HEK293 (cell line): ENCODE measurements at regions of chr6 and their contacts with region 1.

Region 1: GRCh38 chr6:34248727-34249551 is at the start of gene SMIM29:
- H3K4me3 ChIP-seq: peak within 1 kb of the TSS; percentile 79
- H3K27ac ChIP-seq: peak within 1 kb of the TSS; percentile 56; the same call in 1 of the 2 replicates
- H3K4me1 ChIP-seq: peaks cover 3% of the 10 kb centered on the region
- CTCF ChIP-seq: peak; percentile 78

Region 2: DNA sequence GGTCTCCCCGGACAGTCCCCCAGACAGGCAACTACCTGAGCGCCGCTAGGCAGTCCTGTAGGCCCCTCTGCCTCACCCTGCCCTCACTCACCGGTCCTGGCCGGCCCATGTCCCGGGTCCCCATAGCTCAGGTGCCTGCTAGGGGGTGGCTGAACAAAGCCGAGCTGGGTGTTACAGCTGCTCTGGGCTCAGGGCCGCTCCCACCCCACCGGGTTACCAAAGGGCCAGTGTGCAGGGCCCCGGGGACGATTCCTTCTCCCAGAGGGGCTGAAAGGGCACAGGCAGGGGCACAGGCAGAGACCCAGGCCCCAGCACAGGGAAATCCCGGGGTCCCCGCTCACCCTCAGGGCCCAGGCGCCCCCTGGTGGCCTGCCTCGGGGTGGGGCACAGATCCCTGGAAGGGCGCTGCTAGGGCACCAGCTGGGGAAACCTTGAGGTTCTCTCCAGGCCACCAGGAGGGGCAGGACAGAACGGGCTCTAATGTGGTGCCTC is 221.4 kb before region 1 on chr6:
- CTCF ChIA-PET with region 1: no interaction called
- POLR2A ChIA-PET with region 1: no interaction called
- H3K4me3 ChIP-seq: no peak overlapping the region
- H3K27ac ChIP-seq: no peak overlapping the region
- H3K4me1 ChIP-seq: no peaks in the 10 kb centered on the region
- CTCF ChIP-seq: peak; percentile 54

Region 3: DNA sequence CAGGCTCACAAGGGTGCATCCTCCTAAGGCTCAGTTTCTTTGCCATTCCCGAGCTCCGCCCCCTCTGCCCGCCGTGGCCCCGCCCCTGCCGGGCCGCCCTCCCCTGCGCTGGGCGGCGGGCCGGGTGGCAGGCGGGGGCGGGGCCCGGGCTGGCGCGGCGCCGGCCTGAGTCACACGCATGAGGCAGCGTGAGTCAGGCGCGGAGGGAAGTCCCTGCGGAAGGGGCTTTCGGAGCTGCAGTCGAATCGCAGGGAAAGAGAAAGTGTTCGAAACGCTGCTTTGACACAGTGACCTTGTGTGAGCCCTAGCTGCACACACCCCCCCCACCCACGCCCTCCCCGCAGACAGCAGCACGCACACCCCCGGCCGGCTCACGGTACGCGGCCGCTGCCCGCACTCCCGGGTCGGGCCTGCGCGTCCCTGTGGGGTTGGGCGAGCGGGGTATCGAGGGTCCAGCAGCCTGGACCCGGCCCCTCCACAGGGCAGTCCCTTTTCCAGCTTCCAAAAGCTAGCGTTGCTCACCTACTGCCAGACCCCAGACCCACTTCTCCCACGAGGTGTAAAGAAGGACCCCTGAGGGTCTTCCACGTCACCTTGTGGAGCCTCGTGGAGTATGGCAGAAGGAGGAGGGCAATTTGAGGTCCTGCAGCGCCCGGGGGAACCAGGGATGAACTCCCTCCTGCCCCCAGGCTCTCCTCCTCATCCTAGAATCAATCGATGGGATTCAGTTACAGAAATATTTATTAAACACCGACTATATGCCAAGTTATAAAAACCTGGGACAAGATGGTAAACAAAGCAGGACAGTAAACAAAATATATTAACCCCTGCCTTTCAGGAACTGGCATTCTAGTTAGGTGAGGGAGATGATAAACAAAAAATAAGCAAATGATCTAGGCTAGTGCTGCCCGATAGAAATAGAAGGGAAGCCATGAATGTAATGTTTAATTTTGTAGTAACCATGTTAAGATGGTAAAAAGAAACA is 24.7 kb before region 1 on chr6:
- CTCF ChIA-PET with region 1: interaction called, 5 read pairs
- POLR2A ChIA-PET with region 1: interaction called, 13 read pairs
- H3K4me3 ChIP-seq: peak overlapping the region; percentile 49
- H3K27ac ChIP-seq: peak overlapping the region; percentile 54; the same call in 1 of the 2 replicates
- H3K4me1 ChIP-seq: no peaks in the 10 kb centered on the region
- CTCF ChIP-seq: no peak

Region 4: DNA sequence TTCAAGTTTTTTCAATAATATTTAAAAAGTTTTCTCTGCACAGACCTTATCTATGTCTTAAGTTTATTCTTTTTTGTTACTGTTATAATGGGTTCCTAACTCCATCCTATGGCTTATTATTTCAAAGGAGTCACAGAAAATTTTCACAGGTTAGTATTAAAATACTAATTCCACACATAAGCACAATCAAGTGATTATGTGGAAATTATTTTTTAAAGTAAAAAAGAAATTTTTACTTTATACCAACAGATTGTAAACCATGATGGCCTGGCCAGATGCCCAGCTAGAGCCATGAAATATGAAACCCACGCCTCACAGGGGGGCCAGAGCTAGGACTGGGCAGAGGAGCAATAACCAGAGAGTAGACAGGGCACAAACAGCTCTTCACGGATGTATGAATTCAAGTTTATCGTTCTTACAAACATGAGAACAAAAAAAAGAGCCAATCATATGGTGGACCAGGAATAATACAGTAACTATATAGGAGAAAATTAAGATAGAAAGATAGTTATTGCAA is 109.5 kb after region 1 on chr6:
- CTCF ChIA-PET with region 1: interaction called, 11 read pairs
- POLR2A ChIA-PET with region 1: no interaction called
- H3K4me3 ChIP-seq: no peak overlapping the region
- H3K27ac ChIP-seq: no peak overlapping the region
- H3K4me1 ChIP-seq: peaks cover 37% of the 10 kb centered on the region
- CTCF ChIP-seq: no peak

Region 5: GRCh38 chr6:34414999-34415858 is 166.3 kb after region 1 on chr6:
- CTCF ChIA-PET with region 1: interaction called, 101 read pairs
- POLR2A ChIA-PET with region 1: interaction called, 54 read pairs
- H3K4me3 ChIP-seq: no peak overlapping the region
- H3K27ac ChIP-seq: no peak overlapping the region
- H3K4me1 ChIP-seq: no peaks in the 10 kb centered on the region
- CTCF ChIP-seq: peak; percentile 44

Region 6: GRCh38 chr6:34459899-34460593 is 211.1 kb after region 1 on chr6:
- CTCF ChIA-PET with region 1: interaction called, 10 read pairs
- POLR2A ChIA-PET with region 1: interaction called, 3 read pairs
- H3K4me3 ChIP-seq: no peak overlapping the region
- H3K27ac ChIP-seq: no peak overlapping the region
- H3K4me1 ChIP-seq: no peaks in the 10 kb centered on the region
- CTCF ChIP-seq: peak; percentile 57